ENCODE measurements at regions of chr1 and their contacts with region 1.

Region 1: GRCh38 chr1:17355898-17356297 is 16.1 kb upstream of the PADI6 start:
- DNase-seq: no peak
- ATAC-seq: no peak
- H3K4me3 Mint-ChIP-seq: no peak overlapping the region
- H3K27ac Mint-ChIP-seq: no peak overlapping the region
- H3K4me1 Mint-ChIP-seq: peaks cover 6% of the 10 kb centered on the region; the same call in 1 of the 2 replicates
- H3K27me3 Mint-ChIP-seq: peaks cover 3% of the 10 kb centered on the region; the same call in 1 of the 2 replicates
- CTCF ChIP-seq: no peak

Region 2: DNA sequence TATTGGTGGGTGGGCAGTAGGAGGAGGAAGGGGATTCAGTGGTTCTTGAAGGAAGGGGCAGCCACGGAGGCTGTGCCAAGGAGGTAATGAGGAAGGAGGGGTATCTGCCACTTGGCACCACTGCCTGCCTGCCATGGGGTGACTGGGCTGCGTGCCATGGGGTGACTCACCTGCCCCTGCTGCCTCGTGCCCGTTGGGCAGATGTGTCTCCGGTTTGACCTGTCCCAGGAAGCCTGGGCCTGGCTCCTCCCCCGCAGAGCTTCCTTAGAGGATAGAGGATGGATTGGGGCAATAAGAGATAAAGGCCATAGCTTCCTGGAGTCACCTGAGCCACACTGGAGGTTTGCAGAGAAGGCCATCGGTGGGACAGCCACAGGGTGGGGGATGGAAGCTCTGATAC is 105.3 kb before region 1 on chr1:
- CTCF ChIA-PET with region 1: no interaction called
- POLR2A ChIA-PET with region 1: no interaction called
- DNase-seq: no peak
- ATAC-seq: no peak
- H3K4me3 Mint-ChIP-seq: no peak overlapping the region
- H3K27ac Mint-ChIP-seq: no peak overlapping the region
- H3K4me1 Mint-ChIP-seq: peaks cover 15% of the 10 kb centered on the region
- H3K27me3 Mint-ChIP-seq: no peaks in the 10 kb centered on the region
- CTCF ChIP-seq: no peak

Region 3: DNA sequence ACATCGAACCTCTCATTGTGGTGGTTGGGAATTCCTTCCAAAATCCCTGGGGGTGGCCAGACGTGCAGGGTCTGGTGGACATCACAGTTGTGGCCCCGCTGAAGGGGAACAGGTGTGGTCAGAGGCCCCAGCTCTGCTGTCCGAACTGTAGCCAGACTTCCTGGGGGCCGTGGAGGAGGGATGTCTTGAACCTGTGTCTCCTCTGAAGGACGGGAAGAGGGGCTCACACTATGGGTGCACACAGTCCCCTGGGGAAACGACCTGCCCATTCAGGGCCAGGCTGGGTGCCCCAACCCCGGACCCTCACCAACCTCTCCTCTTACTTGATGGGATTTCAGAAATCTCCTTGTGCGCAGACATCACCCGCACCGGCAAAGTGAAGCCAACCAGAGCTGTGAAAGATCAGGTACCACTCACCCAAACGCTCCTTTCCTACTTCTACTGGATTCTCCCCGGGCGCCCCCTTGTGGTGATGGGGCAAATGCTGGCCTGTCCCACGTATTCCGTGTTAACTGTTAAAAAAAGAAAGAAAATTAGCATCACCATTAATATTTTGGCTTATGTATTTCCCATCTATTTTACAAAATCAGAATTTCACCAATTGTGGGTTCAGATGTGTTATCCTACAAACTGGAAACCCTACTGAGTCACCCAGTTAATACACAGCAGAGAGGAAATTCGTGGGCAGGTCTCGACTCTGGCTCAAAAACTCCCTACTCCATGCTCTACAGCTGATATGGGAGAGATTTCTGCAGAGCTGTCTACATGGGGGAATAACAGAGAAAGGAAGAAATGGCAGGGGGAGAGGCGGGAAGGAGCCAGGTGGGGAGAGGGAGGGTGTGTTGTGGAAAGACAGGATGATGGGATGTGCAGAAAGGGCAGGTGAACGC is 19.8 kb before region 1 on chr1:
- CTCF ChIA-PET with region 1: interaction called, 12 read pairs
- POLR2A ChIA-PET with region 1: no interaction called
- DNase-seq: peak; percentile 91
- ATAC-seq: peak; percentile 89
- H3K4me3 Mint-ChIP-seq: no peak overlapping the region
- H3K27ac Mint-ChIP-seq: no peak overlapping the region
- H3K4me1 Mint-ChIP-seq: no peaks in the 10 kb centered on the region
- H3K27me3 Mint-ChIP-seq: no peaks in the 10 kb centered on the region
- CTCF ChIP-seq: peak; percentile 91

Region 4: DNA sequence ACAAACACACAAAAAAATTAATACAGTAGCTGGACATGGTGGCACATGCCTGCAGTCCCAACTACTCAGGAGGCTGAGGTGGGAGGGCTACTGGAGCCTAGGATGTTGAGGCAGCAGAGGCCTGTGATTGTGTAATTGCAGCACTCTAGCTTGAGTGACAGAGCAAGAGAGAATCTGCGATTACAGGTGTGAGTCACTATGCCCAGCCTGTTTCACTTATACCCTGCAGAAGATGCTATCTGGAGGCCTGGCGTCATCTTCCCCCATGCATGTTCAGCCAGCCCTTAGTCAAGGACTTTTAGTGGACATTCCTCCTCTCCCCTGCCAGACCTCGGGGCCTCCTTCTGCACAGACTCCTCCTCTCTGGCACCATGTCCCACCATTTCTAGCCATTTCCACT is 119.8 kb after region 1 on chr1:
- CTCF ChIA-PET with region 1: no interaction called
- POLR2A ChIA-PET with region 1: no interaction called
- DNase-seq: no peak
- ATAC-seq: no peak
- H3K4me3 Mint-ChIP-seq: no peak overlapping the region
- H3K27ac Mint-ChIP-seq: no peak overlapping the region
- H3K4me1 Mint-ChIP-seq: peaks cover 47% of the 10 kb centered on the region
- H3K27me3 Mint-ChIP-seq: no peaks in the 10 kb centered on the region
- CTCF ChIP-seq: no peak